ENCODE measurements at regions of chr19 and their contacts with region 1.

Region 1: GRCh38 chr19:47124937-47125668 is 5.5 kb upstream of the SAE1 start:
- DNase-seq: peak in 1 of 2 donors; percentile 88
- H3K4me3 ChIP-seq: no peak overlapping the region
- H3K27ac ChIP-seq: peak overlapping the region in 3 of 5 donors; percentile 7 to 60 (median 41)
- H3K4me1 ChIP-seq: peaks cover 0 to 13% (median 7%) of the 10 kb centered on the region in 4 donors
- H3K27me3 ChIP-seq: no peaks in the 10 kb centered on the region
- CTCF ChIP-seq: peak in 5 of 7 experiments; percentile 45 to 93 (median 78)
- EP300 ChIP-seq: no peak
- POLR2A ChIP-seq: no peak

Region 2: GRCh38 chr19:47081111-47081510 is 44.0 kb before region 1 on chr19:
- intact Hi-C with region 1: loop called (anchors 5 kb)
- DNase-seq: no peak
- H3K4me3 ChIP-seq: no peak overlapping the region
- H3K27ac ChIP-seq: peak overlapping the region in 2 of 5 donors; percentile 80 to 82
- H3K4me1 ChIP-seq: peaks cover 4 to 10% (median 8%) of the 10 kb centered on the region in 4 donors
- H3K27me3 ChIP-seq: no peaks in the 10 kb centered on the region
- CTCF ChIP-seq: no peak
- EP300 ChIP-seq: no peak
- POLR2A ChIP-seq: no peak

Measured in stomach (tissue), 19 donors.